ENCODE measurements at regions of chr7 and their contacts with region 1.

Region 1: DNA sequence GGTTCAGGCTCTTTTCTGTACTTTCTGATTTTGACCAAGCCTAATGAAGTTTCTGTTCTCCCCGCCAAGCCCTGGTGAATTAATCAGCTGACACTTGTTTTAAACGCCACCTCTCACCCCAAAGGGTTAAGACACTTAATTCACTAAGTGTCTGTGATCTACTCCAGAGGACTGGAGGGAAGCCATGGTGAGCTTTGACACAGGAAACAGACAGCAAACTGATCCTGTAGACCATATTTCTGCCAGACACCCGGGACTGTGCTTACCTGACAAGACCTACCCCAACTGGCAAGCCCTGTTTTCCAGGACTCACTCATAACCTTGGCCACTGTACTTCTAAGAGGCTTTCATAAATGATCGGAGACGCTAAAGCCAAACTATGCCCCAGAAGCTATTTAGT is 126.0 kb downstream of the STRA8 start:
- DNase-seq: no peak
- H3K4me3 ChIP-seq: no peak overlapping the region
- H3K27ac ChIP-seq: no peak overlapping the region
- H3K4me1 ChIP-seq: no peaks in the 10 kb centered on the region
- H3K27me3 ChIP-seq: peaks cover 15% of the 10 kb centered on the region
- CTCF ChIP-seq: no peak

Region 2: DNA sequence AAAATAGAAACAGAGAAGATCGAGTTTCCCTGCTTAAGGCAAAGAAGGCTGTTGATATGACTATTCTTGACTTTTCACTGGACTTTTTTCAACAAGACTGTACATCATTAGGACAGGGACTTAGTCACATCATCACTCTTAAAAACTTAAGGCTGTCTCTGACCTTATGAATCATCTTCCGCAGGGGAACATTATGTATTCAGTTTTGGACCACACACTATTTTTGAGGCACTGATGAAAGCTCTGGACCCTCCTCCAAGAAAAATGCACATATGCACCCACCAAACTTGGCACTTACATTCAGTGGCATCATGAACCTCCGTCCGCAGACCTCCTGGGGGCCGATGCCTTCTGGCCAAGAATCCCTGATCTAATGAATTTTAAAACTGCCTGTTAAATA is 483.7 kb before region 1 on chr7:
- CTCF ChIA-PET with region 1: no interaction called
- POLR2A ChIA-PET with region 1: no interaction called
- intact Hi-C with region 1: no loop called
- DNase-seq: no peak
- H3K4me3 ChIP-seq: no peak overlapping the region
- H3K27ac ChIP-seq: no peak overlapping the region
- H3K4me1 ChIP-seq: peaks cover 31% of the 10 kb centered on the region
- H3K27me3 ChIP-seq: no peaks in the 10 kb centered on the region
- CTCF ChIP-seq: no peak

Region 3: GRCh38 chr7:135372222-135372621 is 12.6 kb after region 1 on chr7:
- CTCF ChIA-PET with region 1: no interaction called
- POLR2A ChIA-PET with region 1: interaction called, 10 read pairs
- intact Hi-C with region 1: no loop called
- DNase-seq: no peak
- H3K4me3 ChIP-seq: no peak overlapping the region
- H3K27ac ChIP-seq: no peak overlapping the region
- H3K4me1 ChIP-seq: no peaks in the 10 kb centered on the region
- H3K27me3 ChIP-seq: no peaks in the 10 kb centered on the region
- CTCF ChIP-seq: no peak

Measured in A673 (cell line).